Activated CD4-positive, alpha-beta memory T cell treated with anti-CD3 and anti-CD28 coated beads for 36 hours (primary cell): ENCODE measurements at regions of chr9 and their contacts with region 1.

Region 1: GRCh38 chr9:96566498-96567207 is 53.0 kb downstream of the CDC14B start:
- DNase-seq: peak; percentile 84
- H3K4me3 Mint-ChIP-seq: peak overlapping the region; percentile 77
- H3K27ac Mint-ChIP-seq: peak overlapping the region; percentile 83
- H3K4me1 Mint-ChIP-seq: peaks cover 30% of the 10 kb centered on the region
- H3K27me3 Mint-ChIP-seq: peaks cover 6% of the 10 kb centered on the region

Region 2: DNA sequence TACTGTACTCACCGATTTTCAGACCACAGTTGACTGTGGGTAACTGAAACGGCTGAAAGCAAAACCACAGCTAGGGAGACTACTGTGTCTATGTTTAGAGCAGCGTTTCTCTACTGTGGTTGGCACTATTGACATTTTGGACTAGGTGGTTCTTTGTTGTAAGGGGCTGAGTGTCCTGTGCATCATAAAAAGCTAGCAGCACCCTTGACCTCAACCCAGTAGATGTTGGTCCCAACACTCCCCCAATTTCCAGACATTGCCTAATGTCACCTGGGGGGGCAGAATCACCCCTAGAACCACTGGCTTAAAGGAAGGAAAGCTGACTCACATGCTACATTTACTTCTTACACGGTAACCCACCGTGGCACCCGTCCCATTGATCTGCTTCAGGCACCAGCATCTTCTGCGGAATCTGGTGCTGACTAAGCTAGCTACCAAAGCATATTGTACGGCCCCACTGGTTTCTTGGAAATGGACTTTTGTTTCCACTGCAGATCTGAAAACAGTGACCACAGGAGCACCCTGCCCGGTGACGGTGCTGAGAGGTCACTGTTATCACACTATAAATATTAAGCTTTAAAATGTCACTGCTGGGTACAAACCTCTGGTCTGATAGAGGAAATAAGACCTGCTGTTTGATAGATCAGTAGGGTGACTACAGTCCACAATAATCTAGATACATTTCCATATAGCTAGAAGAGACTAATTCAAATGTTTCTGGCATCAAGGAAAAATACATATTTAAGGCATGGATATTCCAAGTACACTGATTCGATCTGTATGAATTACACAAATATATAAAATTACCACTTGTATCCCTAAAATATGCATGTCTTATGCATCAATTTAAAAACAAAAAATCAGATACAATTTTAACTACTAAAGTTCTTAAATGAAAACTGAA is 416.1 kb before region 1 on chr9:
- CTCF ChIA-PET with region 1: no interaction called
- POLR2A ChIA-PET with region 1: no interaction called
- intact Hi-C with region 1: no loop called
- DNase-seq: peak; percentile 79
- H3K4me3 Mint-ChIP-seq: no peak overlapping the region
- H3K27ac Mint-ChIP-seq: peak overlapping the region; percentile 42
- H3K4me1 Mint-ChIP-seq: peaks cover 24% of the 10 kb centered on the region
- H3K27me3 Mint-ChIP-seq: peaks cover 24% of the 10 kb centered on the region

Region 3: GRCh38 chr9:96241391-96241809 is 325.3 kb before region 1 on chr9:
- CTCF ChIA-PET with region 1: no interaction called
- POLR2A ChIA-PET with region 1: no interaction called
- intact Hi-C with region 1: loop called (anchors 1 kb)
- DNase-seq: peak; percentile 84
- H3K4me3 Mint-ChIP-seq: peak overlapping the region; percentile 34
- H3K27ac Mint-ChIP-seq: no peak overlapping the region
- H3K4me1 Mint-ChIP-seq: peaks cover 17% of the 10 kb centered on the region
- H3K27me3 Mint-ChIP-seq: peaks cover 69% of the 10 kb centered on the region

Region 4: DNA sequence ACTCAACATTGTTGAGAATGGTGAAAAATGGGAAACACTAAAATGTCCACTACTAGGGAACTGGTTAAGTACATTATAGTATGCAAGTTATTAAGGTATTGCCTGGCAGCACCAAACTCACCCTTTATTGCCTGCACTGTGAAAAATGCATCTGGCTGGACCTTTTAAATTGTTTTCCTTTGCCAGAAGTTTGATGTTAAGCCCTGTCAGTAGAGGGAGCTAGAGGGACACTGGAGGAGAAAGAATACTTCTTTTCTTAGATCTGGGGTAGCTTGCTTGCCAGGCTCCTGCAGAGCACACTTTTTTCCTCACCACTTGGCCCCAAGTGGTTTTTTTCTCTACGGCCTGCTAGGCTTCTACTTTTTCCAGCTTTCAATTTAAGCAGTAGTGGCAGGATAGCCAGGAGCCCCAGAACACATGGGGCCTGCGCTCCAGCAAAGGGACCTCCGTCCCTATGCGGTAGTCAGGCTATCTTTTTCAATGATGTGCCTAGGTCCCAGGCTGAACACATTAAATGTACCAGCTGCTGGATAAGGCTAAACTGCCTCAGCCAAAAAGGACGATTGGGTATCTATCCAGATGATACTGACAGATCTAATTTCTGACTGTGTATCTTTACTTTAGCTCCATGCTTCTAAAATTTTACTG is 124.7 kb before region 1 on chr9:
- CTCF ChIA-PET with region 1: interaction called, 25 read pairs
- POLR2A ChIA-PET with region 1: interaction called, 3 read pairs
- intact Hi-C with region 1: no loop called
- DNase-seq: no peak
- H3K4me3 Mint-ChIP-seq: no peak overlapping the region
- H3K27ac Mint-ChIP-seq: no peak overlapping the region
- H3K4me1 Mint-ChIP-seq: no peaks in the 10 kb centered on the region
- H3K27me3 Mint-ChIP-seq: no peaks in the 10 kb centered on the region

Region 5: GRCh38 chr9:96478829-96479371 is 87.8 kb before region 1 on chr9:
- CTCF ChIA-PET with region 1: interaction called, 7 read pairs
- POLR2A ChIA-PET with region 1: interaction called, 10 read pairs
- intact Hi-C with region 1: loop called (anchors 1 kb)
- DNase-seq: peak; percentile 61
- H3K4me3 Mint-ChIP-seq: no peak overlapping the region
- H3K27ac Mint-ChIP-seq: peak overlapping the region; percentile 91
- H3K4me1 Mint-ChIP-seq: peaks cover 44% of the 10 kb centered on the region
- H3K27me3 Mint-ChIP-seq: no peaks in the 10 kb centered on the region

Region 6: GRCh38 chr9:96540106-96540505 is 26.5 kb before region 1 on chr9:
- CTCF ChIA-PET with region 1: no interaction called
- POLR2A ChIA-PET with region 1: no interaction called
- intact Hi-C with region 1: no loop called
- DNase-seq: no peak
- H3K4me3 Mint-ChIP-seq: no peak overlapping the region
- H3K27ac Mint-ChIP-seq: no peak overlapping the region
- H3K4me1 Mint-ChIP-seq: no peaks in the 10 kb centered on the region
- H3K27me3 Mint-ChIP-seq: no peaks in the 10 kb centered on the region

Region 7: GRCh38 chr9:96553070-96553469 is 13.6 kb before region 1 on chr9:
- CTCF ChIA-PET with region 1: interaction called, 15 read pairs
- POLR2A ChIA-PET with region 1: interaction called, 4 read pairs
- intact Hi-C with region 1: loop called (anchors 1 kb)
- DNase-seq: no peak
- H3K4me3 Mint-ChIP-seq: no peak overlapping the region
- H3K27ac Mint-ChIP-seq: peak overlapping the region; percentile 5
- H3K4me1 Mint-ChIP-seq: peaks cover 45% of the 10 kb centered on the region
- H3K27me3 Mint-ChIP-seq: no peaks in the 10 kb centered on the region

Region 8: DNA sequence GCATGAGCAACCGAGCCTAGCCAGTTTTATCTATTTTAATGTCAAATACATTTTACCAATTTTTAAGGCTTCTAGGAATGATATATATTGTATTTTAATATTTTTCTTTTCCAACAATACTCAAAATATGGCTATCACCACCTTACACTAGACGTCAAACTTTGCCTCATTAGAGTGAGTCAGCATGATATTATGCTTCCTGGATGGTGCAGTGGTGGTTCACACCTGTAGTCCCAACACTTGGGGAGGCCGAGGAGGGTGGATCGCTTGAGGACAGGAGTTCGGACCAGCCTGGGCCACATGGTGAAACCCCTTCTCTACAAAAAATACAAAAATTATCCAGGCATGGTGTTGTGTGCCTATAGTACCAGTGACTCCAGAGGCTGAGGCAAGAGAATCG is 60.3 kb after region 1 on chr9:
- CTCF ChIA-PET with region 1: no interaction called
- POLR2A ChIA-PET with region 1: no interaction called
- intact Hi-C with region 1: no loop called
- DNase-seq: no peak
- H3K4me3 Mint-ChIP-seq: no peak overlapping the region
- H3K27ac Mint-ChIP-seq: no peak overlapping the region
- H3K4me1 Mint-ChIP-seq: peaks cover 6% of the 10 kb centered on the region
- H3K27me3 Mint-ChIP-seq: peaks cover 11% of the 10 kb centered on the region

Region 9: GRCh38 chr9:96813607-96814006 is 247.0 kb after region 1 on chr9:
- CTCF ChIA-PET with region 1: no interaction called
- POLR2A ChIA-PET with region 1: no interaction called
- intact Hi-C with region 1: no loop called
- DNase-seq: no peak
- H3K4me3 Mint-ChIP-seq: no peak overlapping the region
- H3K27ac Mint-ChIP-seq: no peak overlapping the region
- H3K4me1 Mint-ChIP-seq: no peaks in the 10 kb centered on the region
- H3K27me3 Mint-ChIP-seq: no peaks in the 10 kb centered on the region